ENCODE measurements at regions of chr12 and their contacts with region 1.

Region 1: DNA sequence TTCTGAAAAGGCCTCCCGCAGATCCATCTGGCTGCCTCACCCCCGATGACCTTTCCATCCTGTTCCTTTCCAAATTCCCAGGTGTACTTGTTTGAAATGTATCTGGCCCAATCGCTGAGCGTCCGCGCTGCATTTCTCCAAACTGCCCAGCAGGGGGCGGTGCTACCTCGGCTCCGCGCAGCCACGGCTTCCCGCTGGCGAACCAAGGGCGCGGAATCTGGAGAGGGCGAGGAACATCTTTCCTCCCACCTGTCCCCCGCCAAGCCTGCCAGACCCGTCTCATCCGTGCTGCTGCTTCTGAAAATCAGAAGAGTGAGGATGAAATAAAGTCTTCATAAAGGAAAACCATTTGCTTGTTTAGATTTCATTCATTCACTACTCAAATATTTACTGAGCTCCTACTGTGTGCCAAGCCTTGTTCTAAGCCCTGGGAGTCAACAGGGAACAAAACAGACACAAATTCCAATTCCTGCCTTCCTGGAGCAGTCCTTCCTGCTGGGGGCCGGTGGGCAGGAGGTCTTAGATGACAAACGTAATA is 16.8 kb upstream of the MYL2 start:
- DNase-seq: no peak

Region 2: GRCh38 chr12:110906083-110906482 is 31.1 kb before region 1 on chr12:
- intact Hi-C with region 1: no loop called
- DNase-seq: no peak

Region 3: GRCh38 chr12:110998165-110998564 is 61.0 kb after region 1 on chr12:
- intact Hi-C with region 1: loop called (anchors 5 kb)
- DNase-seq: no peak

Region 4: DNA sequence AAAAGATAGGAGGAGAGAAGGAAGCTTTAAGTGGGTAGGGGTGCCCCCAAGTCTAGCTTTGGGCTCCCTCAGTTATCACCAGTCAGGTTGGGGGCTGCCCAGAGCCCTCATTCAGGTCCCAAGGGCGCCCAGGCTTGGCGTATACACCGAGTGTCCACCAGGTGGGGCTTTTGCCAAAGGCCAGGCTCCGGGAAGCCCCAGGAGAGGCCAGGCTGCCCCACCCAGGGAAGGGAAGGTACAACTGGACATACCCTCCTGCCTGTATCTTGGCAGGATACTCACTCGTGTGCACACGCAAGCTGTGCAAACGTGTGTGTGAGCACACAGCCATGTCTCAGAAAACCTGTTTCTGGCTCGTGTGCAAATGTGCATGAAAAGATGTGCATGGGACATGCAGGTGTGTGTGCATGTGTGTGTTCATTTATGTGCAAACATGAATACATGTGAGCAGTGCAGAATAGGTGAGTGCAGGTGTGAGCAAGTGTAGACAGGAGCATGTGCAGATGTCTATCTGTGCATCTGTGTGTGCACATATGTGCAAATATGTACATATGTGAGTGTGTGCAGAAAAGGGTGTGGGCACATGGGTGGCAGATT is 87.1 kb after region 1 on chr12:
- intact Hi-C with region 1: loop called (anchors 5 kb)
- DNase-seq: no peak

Region 5: GRCh38 chr12:111298582-111299436 is 361.6 kb after region 1 on chr12:
- intact Hi-C with region 1: loop called (anchors 2 kb)
- DNase-seq: no peak

Region 6: GRCh38 chr12:111313833-111314259 is 376.7 kb after region 1 on chr12:
- intact Hi-C with region 1: loop called (anchors 2 kb)
- DNase-seq: peak; percentile 85

Measured in cardiac septum (tissue), 1 donor.